ENCODE measurements at regions of chr10 and their contacts with region 1.

Region 1: DNA sequence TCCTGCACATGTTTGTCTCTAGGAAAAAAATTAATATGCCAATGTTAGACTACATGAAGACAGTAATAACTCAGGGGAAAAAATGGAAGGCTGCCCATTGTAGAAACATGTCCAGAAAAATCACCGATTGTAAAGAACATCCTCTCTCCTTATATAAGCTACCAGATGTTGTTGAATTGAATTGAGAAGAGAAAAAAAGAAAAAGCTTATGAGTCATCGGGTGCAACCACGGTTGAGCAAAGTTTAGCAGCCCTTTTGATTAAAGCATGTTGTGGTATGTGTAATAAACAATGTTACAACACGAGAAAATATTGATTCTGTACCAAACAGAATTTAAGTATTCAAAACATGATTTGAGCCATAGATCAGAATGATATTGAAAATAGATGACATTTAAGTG is 102.3 kb upstream of the ARHGAP21 start:
- DNase-seq: no peak
- ATAC-seq: no peak
- H3K4me3 Mint-ChIP-seq: peak overlapping the region; percentile 29
- H3K27ac Mint-ChIP-seq: no peak overlapping the region
- H3K4me1 Mint-ChIP-seq: peaks cover 41% of the 10 kb centered on the region
- H3K27me3 Mint-ChIP-seq: no peaks in the 10 kb centered on the region

Region 2: GRCh38 chr10:24866604-24867583 is 40.9 kb after region 1 on chr10:
- CTCF ChIA-PET with region 1: no interaction called
- POLR2A ChIA-PET with region 1: no interaction called
- intact Hi-C with region 1: loop called in 1 of 2 experiments (anchors 5 kb)
- DNase-seq: peak; percentile 19
- ATAC-seq: peak; percentile 27
- H3K4me3 Mint-ChIP-seq: no peak overlapping the region
- H3K27ac Mint-ChIP-seq: no peak overlapping the region
- H3K4me1 Mint-ChIP-seq: peaks cover 29% of the 10 kb centered on the region
- H3K27me3 Mint-ChIP-seq: no peaks in the 10 kb centered on the region

Region 3: DNA sequence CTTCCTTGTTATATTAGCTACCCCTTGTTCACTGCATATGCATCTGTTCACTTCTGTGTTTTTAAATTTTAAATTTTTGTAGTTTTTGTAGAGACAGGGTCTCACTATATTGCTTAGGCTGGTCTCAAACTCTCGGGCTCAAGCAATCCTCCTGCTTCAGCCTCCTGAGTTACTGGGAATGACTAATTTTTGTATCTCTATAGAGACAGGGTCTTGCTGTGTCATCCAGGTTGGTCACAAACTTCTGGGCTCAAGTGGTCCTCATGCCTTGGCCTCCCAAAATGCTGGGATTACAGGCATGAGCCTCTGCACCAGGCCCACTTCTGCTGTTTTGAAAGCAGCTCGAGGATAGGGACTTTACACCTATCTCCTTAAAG is 61.8 kb after region 1 on chr10:
- CTCF ChIA-PET with region 1: no interaction called
- POLR2A ChIA-PET with region 1: no interaction called
- intact Hi-C with region 1: loop called in 1 of 2 experiments (anchors 5 kb)
- DNase-seq: no peak
- ATAC-seq: peak; percentile 17
- H3K4me3 Mint-ChIP-seq: no peak overlapping the region
- H3K27ac Mint-ChIP-seq: peak overlapping the region; percentile 60
- H3K4me1 Mint-ChIP-seq: peaks cover 24% of the 10 kb centered on the region
- H3K27me3 Mint-ChIP-seq: no peaks in the 10 kb centered on the region

Region 4: DNA sequence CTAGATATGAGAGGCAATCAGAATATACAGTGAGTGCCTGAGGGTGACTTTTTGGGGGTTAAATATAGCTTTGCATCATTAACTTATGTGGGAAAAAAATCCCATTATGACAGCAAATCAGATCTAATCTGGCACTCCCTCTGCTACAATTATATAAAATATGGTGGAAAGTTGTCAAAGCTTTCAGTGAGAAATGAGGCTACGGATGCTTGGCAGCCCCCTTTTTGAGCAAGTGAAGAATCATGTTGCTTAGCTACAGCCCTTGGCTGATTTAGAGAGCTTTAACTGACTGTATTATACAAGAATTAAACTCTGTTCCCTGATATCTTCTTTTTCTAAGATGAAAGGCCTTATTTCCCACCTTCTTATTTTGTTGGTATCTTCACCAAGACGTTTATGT is 406.2 kb after region 1 on chr10:
- CTCF ChIA-PET with region 1: no interaction called
- POLR2A ChIA-PET with region 1: no interaction called
- intact Hi-C with region 1: no loop called
- DNase-seq: no peak
- ATAC-seq: no peak
- H3K4me3 Mint-ChIP-seq: no peak overlapping the region
- H3K27ac Mint-ChIP-seq: no peak overlapping the region
- H3K4me1 Mint-ChIP-seq: no peaks in the 10 kb centered on the region
- H3K27me3 Mint-ChIP-seq: peaks cover 2% of the 10 kb centered on the region